T-cell (primary cell): ENCODE measurements at regions of chr19 and their contacts with region 1.

Region 1: DNA sequence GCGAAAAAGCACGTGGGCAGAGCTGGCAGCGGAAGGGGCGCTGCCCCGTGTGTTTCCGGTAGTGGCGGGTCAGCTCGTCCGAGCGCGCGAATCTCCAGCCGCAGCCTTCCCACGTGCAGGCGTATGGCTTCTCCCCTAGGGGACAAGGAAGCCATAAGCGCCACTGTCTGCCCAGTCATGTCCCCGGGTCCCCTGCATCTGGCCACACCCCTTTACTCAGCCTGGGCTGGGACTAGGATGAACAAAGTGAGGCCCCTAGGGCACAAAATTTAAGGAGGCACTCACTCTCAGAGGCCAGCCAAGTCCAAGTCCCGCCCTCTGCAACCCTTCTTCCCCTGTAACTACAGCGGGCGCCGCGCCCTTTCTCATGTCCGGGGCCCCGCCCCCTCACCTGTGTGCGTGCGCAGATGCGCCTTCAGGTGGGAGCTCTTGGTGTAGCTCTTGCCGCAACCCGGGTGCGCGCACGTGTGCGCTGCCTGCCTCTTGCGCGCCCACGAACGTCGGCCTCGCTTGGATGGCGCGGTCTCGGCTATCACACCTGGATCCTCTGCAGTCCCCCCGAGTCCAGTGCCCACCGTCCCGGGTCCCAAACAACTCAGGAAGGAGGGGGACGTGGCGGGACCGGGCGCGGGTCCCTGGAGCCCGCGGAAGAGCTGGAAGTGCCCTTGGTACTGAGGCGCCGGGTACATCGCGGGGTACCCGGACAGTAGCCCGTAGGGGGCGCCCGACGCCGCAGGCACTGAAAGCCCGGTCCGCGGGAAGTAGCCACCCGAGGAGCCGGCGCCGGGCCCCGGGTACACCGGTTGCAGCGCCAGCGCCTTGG is 1.9 kb downstream of the KLF1 start:
- DNase-seq: peak; percentile 73 to 91 (median 85)
- ATAC-seq: peak; percentile 72 to 78 (median 75)
- H3K4me3 ChIP-seq: peak overlapping the region; percentile 35 to 64
- H3K4me3 Mint-ChIP-seq: peak overlapping the region; percentile 80 to 86 (median 85)
- H3K27ac ChIP-seq: peak overlapping the region; percentile 55
- H3K27ac Mint-ChIP-seq: peak overlapping the region; percentile 83 to 84
- H3K4me1 ChIP-seq: peaks cover 3 to 36% of the 10 kb centered on the region in 2 experiments
- H3K4me1 Mint-ChIP-seq: peaks cover 25 to 33% (median 26%) of the 10 kb centered on the region in 3 donors
- H3K27me3 ChIP-seq: peaks cover 0 to 8% of the 10 kb centered on the region in 2 experiments
- H3K27me3 Mint-ChIP-seq: peaks cover 0 to 2% of the 10 kb centered on the region in 2 donors

Region 2: GRCh38 chr19:12754465-12755196 is 130.5 kb before region 1 on chr19:
- CTCF ChIA-PET with region 1: no interaction called
- POLR2A ChIA-PET with region 1: interaction called in 1 of 2 experiments, 12 read pairs
- DNase-seq: no peak
- ATAC-seq: no peak
- H3K4me3 ChIP-seq: no peak overlapping the region
- H3K4me3 Mint-ChIP-seq: no peak overlapping the region
- H3K27ac ChIP-seq: no peak overlapping the region
- H3K27ac Mint-ChIP-seq: no peak overlapping the region
- H3K4me1 ChIP-seq: peaks cover 0 to 18% of the 10 kb centered on the region in 2 experiments
- H3K4me1 Mint-ChIP-seq: peaks cover 4 to 15% (median 7%) of the 10 kb centered on the region in 3 donors
- H3K27me3 ChIP-seq: peaks cover 0 to 74% of the 10 kb centered on the region in 2 experiments
- H3K27me3 Mint-ChIP-seq: peaks cover 28 to 43% of the 10 kb centered on the region in 2 donors

Region 3: GRCh38 chr19:12847159-12848139 is 37.7 kb before region 1 on chr19:
- CTCF ChIA-PET with region 1: no interaction called
- POLR2A ChIA-PET with region 1: no interaction called
- DNase-seq: peak; percentile 32 to 86 (median 66)
- ATAC-seq: peak; percentile 93 to 97 (median 96)
- H3K4me3 ChIP-seq: peak overlapping the region; percentile 11 to 15
- H3K4me3 Mint-ChIP-seq: peak overlapping the region; percentile 17 to 45 (median 36)
- H3K27ac ChIP-seq: no peak overlapping the region
- H3K27ac Mint-ChIP-seq: no peak overlapping the region
- H3K4me1 ChIP-seq: peaks cover 0 to 11% of the 10 kb centered on the region in 2 experiments
- H3K4me1 Mint-ChIP-seq: peaks cover 0 to 8% (median 6%) of the 10 kb centered on the region in 3 donors
- H3K27me3 ChIP-seq: peaks cover 5 to 57% of the 10 kb centered on the region in 2 experiments
- H3K27me3 Mint-ChIP-seq: peaks cover 24 to 37% of the 10 kb centered on the region in 2 donors

Region 4: DNA sequence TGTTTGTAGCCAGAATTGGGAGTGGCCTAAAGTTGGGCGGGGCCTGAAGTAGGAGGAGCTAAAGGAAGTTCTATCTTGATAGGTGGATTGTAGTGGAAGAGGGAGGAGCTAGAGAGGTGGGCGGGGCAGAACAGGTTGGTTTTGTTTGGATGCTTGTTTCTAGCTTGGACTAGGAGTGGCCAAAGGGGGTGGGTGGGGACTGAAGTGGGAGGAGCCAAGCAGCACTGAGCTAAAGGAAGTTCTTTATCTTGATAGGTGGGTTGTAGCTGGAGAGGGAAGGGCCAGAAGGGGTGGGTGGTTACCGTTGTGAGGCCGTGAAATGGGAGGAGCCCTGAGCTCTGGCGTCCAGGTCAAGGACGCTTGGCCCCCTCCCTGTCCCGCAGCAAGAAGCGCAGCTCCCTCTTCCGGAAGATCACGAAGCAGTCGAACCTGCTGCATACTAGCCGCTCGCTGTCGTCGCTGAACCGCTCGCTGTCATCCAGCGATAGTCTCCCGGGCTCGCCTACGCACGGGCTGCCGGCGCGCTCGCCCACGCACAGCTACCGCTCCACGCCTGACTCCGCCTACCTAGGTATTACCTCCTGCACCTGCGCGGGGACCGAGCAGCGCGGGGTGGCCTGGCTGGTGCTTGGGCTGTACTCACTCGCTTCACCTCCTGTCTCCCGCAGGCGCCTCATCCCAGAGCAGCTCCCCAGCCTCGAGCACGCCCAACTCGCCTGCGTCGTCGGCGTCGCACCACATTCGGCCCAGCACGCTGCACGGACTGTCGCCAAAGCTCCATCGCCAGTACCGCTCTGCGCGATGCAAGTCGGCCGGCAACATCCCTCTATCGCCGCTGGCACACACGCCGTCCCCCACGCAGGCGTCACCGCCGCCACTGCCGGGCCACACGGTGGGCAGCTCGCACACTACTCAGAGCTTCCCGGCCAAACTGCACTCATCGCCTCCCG is 11.9 kb before region 1 on chr19:
- CTCF ChIA-PET with region 1: interaction called in 1 of 2 experiments, 12 read pairs
- POLR2A ChIA-PET with region 1: interaction called in 1 of 2 experiments, 5 read pairs
- DNase-seq: peak; percentile 25 to 82 (median 62)
- ATAC-seq: peak; percentile 45 to 78 (median 68)
- H3K4me3 ChIP-seq: peak overlapping the region; percentile 24 to 54
- H3K4me3 Mint-ChIP-seq: peak overlapping the region; percentile 28 to 64 (median 33)
- H3K27ac ChIP-seq: no peak overlapping the region
- H3K27ac Mint-ChIP-seq: peak overlapping the region in 1 of 2 donors; percentile 52
- H3K4me1 ChIP-seq: peaks cover 0 to 5% of the 10 kb centered on the region in 2 experiments
- H3K4me1 Mint-ChIP-seq: peaks cover 0 to 7% (median 0%) of the 10 kb centered on the region in 3 donors
- H3K27me3 ChIP-seq: peaks cover 0 to 6% of the 10 kb centered on the region in 2 experiments
- H3K27me3 Mint-ChIP-seq: no peaks in the 10 kb centered on the region

Region 5: GRCh38 chr19:12899891-12900518 is 14.9 kb after region 1 on chr19:
- CTCF ChIA-PET with region 1: no interaction called
- POLR2A ChIA-PET with region 1: no interaction called
- DNase-seq: no peak
- ATAC-seq: no peak
- H3K4me3 ChIP-seq: no peak overlapping the region
- H3K4me3 Mint-ChIP-seq: no peak overlapping the region
- H3K27ac ChIP-seq: no peak overlapping the region
- H3K27ac Mint-ChIP-seq: no peak overlapping the region
- H3K4me1 ChIP-seq: no peaks in the 10 kb centered on the region
- H3K4me1 Mint-ChIP-seq: no peaks in the 10 kb centered on the region
- H3K27me3 ChIP-seq: no peaks in the 10 kb centered on the region
- H3K27me3 Mint-ChIP-seq: no peaks in the 10 kb centered on the region

Region 6: GRCh38 chr19:12965017-12965811 is 80.1 kb after region 1 on chr19:
- CTCF ChIA-PET with region 1: interaction called, 12 to 19 read pairs
- POLR2A ChIA-PET with region 1: interaction called in 1 of 2 experiments, 6 read pairs
- DNase-seq: peak; percentile 47 to 88 (median 71)
- ATAC-seq: peak; percentile 94 to 98 (median 97)
- H3K4me3 ChIP-seq: peak overlapping the region; percentile 47 to 79
- H3K4me3 Mint-ChIP-seq: peak overlapping the region; percentile 83 to 95 (median 86)
- H3K27ac ChIP-seq: no peak overlapping the region
- H3K27ac Mint-ChIP-seq: peak overlapping the region; percentile 65 to 76
- H3K4me1 ChIP-seq: peaks cover 0 to 11% of the 10 kb centered on the region in 2 experiments
- H3K4me1 Mint-ChIP-seq: peaks cover 5 to 12% (median 6%) of the 10 kb centered on the region in 3 donors
- H3K27me3 ChIP-seq: no peaks in the 10 kb centered on the region
- H3K27me3 Mint-ChIP-seq: no peaks in the 10 kb centered on the region